Right ventricle myocardium superior (tissue), 1 donor: ENCODE measurements at regions of chr12 and their contacts with region 1.

Region 1: DNA sequence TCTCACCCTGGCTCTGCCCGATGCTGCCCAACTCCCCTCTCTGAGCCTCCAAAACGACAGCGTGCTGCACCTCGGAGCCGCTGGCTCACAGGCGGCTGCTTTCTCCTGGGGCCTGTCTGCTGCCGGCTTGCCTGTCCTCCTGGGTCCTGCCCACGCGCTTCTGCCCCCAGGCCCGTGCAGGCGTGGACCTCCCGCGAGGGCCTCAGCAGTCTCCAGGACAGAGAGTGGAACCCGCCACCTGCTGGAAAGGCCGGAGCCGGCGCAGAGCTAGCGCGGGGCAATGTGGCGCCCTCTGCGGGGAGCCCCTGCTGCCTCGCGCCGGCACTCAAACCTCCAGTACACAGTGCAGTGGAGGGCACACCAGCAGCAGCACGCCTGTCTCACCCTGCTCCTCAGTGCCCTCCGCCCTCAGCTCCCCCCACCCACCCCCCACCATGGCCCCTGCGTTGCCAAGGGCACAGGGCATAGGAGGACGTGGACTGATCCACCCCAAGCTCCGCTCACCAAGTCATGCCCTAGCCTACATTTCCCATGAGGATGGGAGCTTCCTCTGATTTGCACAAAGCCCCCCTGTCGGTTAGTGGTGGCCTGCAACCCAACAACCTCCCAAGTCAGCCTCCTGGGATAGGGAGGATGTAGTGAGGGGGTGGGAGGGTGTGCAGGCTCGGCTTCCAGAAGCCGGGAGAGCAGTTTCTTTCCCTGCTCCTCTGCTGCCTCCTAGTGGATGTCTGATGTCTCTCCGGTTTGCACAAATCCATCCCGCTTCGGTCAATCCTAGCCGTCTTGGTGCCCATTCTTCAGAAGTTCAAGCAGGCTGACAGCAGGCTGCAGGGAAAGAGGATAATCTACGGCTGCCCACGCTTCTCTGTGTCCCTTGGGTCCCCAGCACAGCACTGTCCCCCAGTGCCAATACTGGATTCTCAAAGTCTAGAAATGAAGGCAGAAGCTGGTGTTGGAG is 25.2 kb downstream of the KRT8 start:
- DNase-seq: peak; percentile 86
- ATAC-seq: peak; percentile 92

Region 2: GRCh38 chr12:52372216-52373154 is 507.2 kb before region 1 on chr12:
- intact Hi-C with region 1: loop called (anchors 5 kb)
- DNase-seq: peak; percentile 87
- ATAC-seq: peak; percentile 94

Region 3: GRCh38 chr12:52582971-52583456 is 296.7 kb before region 1 on chr12:
- intact Hi-C with region 1: loop called (anchors 2 kb)
- DNase-seq: no peak
- ATAC-seq: peak; percentile 90

Region 4: DNA sequence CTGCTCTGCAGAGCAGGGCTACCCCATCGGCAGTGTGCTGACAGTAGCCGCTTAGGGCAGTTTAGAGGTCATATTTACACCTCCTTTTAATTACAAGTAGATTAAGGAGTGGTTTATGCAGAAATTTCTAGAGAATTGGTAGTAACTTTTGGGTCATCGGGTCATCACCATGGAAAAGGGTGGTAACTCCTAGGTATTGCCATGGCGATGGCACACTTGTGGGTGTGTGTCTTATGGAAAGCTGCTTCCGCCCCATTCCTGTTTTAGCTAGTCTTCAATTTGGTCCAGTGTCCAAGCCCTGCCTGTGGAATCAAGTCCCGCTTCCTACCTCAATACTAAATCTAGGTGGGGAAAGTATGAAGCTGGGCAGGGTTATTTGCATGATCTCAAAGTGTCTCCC is 271.4 kb after region 1 on chr12:
- intact Hi-C with region 1: no loop called
- DNase-seq: no peak
- ATAC-seq: no peak